Posterior cingulate gyrus (tissue), 11 donors: ENCODE measurements at regions of chr19 and their contacts with region 1.

Region 1: GRCh38 chr19:49877020-49877878 is at the starts of genes AKT1S1 and TBC1D17:
- DNase-seq: peak; percentile 99 to 100 (median 100)

Region 2: GRCh38 chr19:49497047-49497788 is 380.0 kb before region 1 on chr19:
- intact Hi-C with region 1: loop called (anchors 10 kb)
- DNase-seq: peak in 2 of 10 donors; percentile 34 to 36

Region 3: GRCh38 chr19:49799621-49800376 is 77.5 kb before region 1 on chr19:
- intact Hi-C with region 1: no loop called
- DNase-seq: no peak

Region 4: GRCh38 chr19:49817964-49818648 is 59.1 kb before region 1 on chr19 and contains the start of gene MED25:
- intact Hi-C with region 1: loop called (anchors 1 kb)
- DNase-seq: peak; percentile 73 to 97 (median 82)

Region 5: DNA sequence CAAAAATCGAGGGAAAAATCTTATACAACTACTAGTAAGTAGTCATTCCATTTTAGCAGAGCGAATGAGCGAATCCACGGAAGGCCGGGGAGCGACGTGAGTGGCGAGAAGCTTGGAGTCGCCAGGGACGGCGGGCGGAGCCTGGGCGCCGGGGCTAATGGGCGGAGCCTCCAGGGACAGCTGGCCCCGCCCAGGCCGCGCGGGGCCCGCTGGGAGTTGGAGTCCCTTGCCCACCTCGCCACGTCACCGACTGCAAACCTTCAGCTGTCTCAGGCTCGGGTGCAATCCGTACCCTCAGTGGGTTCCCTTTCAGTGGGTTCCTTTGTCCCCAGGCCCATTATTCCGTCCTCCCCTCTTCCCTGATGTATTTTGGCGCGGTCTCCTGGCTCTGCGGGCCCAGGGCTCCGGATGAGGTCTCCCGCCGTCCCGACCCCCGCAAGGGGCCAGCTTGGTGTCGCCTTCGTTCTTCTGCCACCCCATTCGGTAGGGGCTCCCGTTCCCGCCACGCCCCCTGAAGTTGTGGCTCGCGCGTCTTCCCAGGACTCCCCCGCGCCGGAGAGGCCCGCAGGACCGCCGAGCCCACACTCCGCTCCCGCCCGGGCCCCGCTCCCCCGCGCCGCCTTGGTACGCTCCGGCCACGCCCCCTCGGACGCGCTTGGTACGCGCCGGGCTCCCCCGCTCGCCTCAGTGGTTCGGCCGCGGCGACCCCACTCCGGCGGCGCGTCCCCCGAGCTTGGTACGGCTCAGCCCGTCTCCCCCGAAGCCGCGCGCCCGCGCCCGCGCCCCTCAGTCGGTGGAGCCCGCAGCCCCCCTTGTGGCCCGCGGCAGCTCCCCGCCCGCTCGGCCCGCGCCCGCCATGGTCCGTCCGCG is 26.5 kb before region 1 on chr19 and contains the start of gene PTOV1:
- intact Hi-C with region 1: loop called (anchors 1 kb)
- DNase-seq: peak; percentile 90 to 99 (median 95)